Heart right ventricle (tissue), 16 donors: ENCODE measurements at regions of chr6 and their contacts with region 1.

Region 1: GRCh38 chr6:50128420-50129005 is 78.8 kb upstream of the DEFB112 start:
- DNase-seq: no peak
- ATAC-seq: no peak
- H3K4me3 ChIP-seq: no peak overlapping the region
- H3K27ac ChIP-seq: no peak overlapping the region
- H3K4me1 ChIP-seq: no peaks in the 10 kb centered on the region
- H3K27me3 ChIP-seq: peaks cover 0 to 9% (median 0%) of the 10 kb centered on the region in 7 donors
- CTCF ChIP-seq: peak in 8 of 9 donors; percentile 15 to 64 (median 47)

Region 2: DNA sequence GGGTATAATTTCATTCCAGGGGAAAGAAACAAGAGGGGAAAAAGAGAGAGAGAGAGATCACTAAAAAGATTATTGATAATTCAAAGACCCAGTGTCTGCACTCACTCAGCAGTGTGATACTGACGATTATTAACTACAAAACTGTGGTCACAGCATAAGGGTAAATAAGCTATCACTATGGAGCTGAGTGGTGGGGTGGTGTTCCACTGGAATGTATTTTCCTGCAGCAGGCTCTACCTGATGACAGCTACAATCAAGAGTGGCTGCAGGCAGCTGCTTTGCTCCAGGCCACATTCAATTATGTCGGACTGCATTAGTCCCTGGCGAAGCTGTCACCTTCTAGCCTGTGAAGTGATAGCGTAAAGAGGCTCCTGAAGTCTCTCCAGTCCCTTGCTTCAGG is 462.6 kb after region 1 on chr6:
- intact Hi-C with region 1: loop called in 2 of 10 experiments (anchors 5 to 10 kb)
- DNase-seq: no peak
- ATAC-seq: peak in 1 of 8 donors; percentile 47
- H3K4me3 ChIP-seq: no peak overlapping the region
- H3K27ac ChIP-seq: no peak overlapping the region
- H3K4me1 ChIP-seq: no peaks in the 10 kb centered on the region
- H3K27me3 ChIP-seq: no peaks in the 10 kb centered on the region
- CTCF ChIP-seq: no peak

Region 3: GRCh38 chr6:50602292-50602691 is 473.8 kb after region 1 on chr6:
- intact Hi-C with region 1: loop called in 6 of 10 experiments (anchors 5 to 10 kb)
- DNase-seq: no peak
- ATAC-seq: no peak
- H3K4me3 ChIP-seq: no peak overlapping the region
- H3K27ac ChIP-seq: no peak overlapping the region
- H3K4me1 ChIP-seq: no peaks in the 10 kb centered on the region
- H3K27me3 ChIP-seq: peaks cover 0 to 3% (median 0%) of the 10 kb centered on the region in 7 donors
- CTCF ChIP-seq: peak; percentile 30 to 82 (median 71)

Region 4: GRCh38 chr6:50791900-50792508 is 663.5 kb after region 1 on chr6:
- intact Hi-C with region 1: loop called in 1 of 10 experiments (anchors 5 kb)
- DNase-seq: no peak
- ATAC-seq: no peak
- H3K4me3 ChIP-seq: no peak overlapping the region
- H3K27ac ChIP-seq: no peak overlapping the region
- H3K4me1 ChIP-seq: no peaks in the 10 kb centered on the region
- H3K27me3 ChIP-seq: peaks cover 0 to 18% (median 0%) of the 10 kb centered on the region in 7 donors
- CTCF ChIP-seq: peak; percentile 12 to 75 (median 58)

Region 5: DNA sequence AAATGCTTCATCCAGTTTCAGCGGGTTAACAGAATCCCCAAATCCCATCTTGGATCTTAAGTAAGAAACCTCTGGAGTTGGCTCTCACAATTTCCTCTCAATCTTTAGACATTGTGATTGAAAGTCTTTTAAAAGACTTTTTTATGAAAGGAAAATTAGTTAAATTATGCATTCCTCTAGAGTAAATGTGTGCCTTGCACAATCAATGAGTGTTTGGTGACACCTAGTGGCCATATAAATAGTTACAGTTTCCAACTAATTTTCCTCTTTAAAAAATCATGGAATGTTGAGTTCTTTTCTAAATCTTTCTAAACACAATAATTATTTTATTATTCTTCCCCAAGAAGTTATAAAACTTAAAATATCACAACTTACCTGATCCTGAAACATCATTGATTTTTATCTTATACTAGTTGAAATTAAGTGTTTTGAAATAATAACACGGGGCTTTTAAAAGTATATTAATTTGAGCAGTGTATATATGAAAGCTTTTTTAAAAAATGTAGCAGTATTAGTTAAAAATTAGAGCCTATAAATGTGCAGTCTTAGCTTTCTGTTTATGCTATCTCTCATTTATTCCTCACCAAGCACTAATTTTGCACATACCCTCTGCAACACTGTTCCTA is 1892.5 kb after region 1 on chr6:
- intact Hi-C with region 1: loop called in 1 of 10 experiments (anchors 10 kb)
- DNase-seq: no peak
- ATAC-seq: no peak
- H3K4me3 ChIP-seq: no peak overlapping the region
- H3K27ac ChIP-seq: no peak overlapping the region
- H3K4me1 ChIP-seq: no peaks in the 10 kb centered on the region
- H3K27me3 ChIP-seq: peaks cover 0 to 29% (median 5%) of the 10 kb centered on the region in 7 donors
- CTCF ChIP-seq: peak; percentile 59 to 85 (median 79)